ENCODE measurements at regions of chr4 and their contacts with region 1.

Region 1: DNA sequence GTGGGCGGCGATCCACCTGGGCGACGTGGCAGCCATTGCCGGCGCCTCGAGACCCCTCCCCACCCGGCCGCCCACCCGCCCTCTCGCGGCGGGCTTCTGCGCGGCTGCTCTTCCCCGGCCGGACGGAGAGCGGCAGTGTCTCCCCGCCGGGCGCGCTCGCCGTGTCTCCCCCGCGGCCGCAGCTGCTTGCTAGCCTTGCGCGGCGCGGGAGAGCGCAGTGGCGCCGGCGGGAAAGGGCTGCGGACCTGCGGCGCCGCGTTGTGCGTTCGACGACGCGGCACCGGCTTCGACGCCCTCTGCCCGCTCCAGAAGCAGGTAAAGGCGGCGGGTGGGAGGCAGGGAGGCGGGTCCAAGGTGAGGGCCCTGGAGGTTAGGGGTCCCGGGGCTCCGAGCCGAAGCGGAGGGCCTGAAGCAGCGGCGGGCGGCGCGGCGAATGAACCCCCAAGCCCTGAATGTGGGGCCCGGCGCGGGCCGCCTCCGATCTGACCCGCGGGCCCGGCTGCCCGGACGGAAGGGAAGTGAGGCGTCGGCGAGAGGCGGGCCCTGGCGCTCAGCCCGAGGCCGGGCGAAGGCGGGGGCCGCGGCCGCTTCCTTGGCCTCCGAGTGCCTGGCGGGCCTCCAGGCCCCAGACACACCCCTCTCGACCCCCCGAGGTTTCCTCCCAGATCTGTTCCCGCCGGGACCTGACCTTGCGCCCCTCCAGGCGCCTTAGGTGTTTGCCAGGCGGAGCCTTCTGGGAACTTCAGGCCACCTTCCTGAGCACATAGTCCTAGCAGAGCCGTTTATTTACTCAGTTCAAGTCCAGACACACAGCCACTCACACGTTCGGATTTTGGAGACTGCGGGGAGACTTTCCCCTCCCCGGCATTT is at the start of gene N4BP2:
- DNase-seq: peak; percentile 87
- ATAC-seq: peak; percentile 72
- H3K4me3 ChIP-seq: peak within 1 kb of the TSS; percentile 69 to 91 (median 82)
- H3K4me3 Mint-ChIP-seq: peak within 1 kb of the TSS; percentile 95
- H3K27ac ChIP-seq: peak within 1 kb of the TSS; percentile 79 to 84
- H3K27ac Mint-ChIP-seq: peak within 1 kb of the TSS; percentile 94
- H3K4me1 ChIP-seq: peaks cover 14 to 17% of the 10 kb centered on the region in 2 donors
- H3K4me1 Mint-ChIP-seq: peaks cover 27% of the 10 kb centered on the region
- H3K27me3 ChIP-seq: no peaks in the 10 kb centered on the region
- H3K27me3 Mint-ChIP-seq: no peaks in the 10 kb centered on the region
- CTCF ChIP-seq: peak; percentile 83
- total RNA-seq, gene N4BP2: 12.8 and 16.4 TPM in 2 replicates

Region 2: DNA sequence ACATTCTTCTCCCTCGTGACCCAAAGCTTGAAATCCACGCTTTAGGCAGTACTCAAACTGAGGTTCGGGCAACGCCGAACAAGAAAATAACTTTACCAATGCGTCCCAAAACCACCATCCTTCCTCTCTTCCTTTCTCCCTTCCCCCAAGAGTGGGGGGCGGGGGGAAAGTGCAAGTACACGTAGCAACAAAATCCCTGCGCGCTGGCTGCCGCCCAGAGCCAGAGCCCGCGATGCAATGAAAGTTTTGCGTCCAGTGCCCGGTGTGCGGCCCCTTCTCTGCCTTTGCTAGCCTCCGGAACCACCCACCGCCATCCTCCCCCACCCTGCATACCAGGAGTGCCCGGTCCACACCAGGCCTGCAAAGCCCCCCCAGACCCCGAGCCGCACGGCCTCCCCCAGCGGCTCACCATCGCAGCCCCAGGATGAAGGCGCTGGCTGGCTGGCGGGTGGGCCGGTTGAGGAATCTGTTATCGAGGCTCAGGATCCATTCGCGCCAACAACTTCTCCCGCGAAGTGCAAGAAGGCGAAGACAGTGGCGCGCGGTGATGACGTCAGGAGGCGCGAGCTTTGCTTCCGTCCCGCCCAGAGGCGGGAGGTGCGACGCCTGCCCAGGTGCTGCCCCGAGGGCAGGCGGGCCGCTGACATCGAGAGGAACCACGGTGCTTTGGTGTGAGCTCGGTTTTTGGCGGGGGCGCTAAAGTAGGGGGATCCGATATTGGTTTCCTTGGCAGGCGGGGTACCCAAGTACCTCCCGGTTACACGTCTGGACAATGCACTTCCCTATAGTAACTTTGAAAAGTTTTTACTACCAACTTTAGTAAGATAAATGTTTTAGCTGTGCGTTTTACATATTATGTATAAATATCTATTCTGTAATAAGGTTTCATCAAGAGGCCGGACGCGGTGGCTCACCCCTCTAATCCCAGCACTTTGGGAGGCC is 690.9 kb before region 1 on chr4 and contains the start of gene RFC1:
- CTCF ChIA-PET with region 1: no interaction called
- POLR2A ChIA-PET with region 1: no interaction called
- intact Hi-C with region 1: loop called (anchors 10 kb)
- DNase-seq: peak; percentile 96
- ATAC-seq: peak; percentile 95
- H3K4me3 ChIP-seq: peak within 1 kb of the TSS; percentile 73 to 98 (median 94)
- H3K4me3 Mint-ChIP-seq: peak within 1 kb of the TSS; percentile 94
- H3K27ac ChIP-seq: peak within 1 kb of the TSS; percentile 65 to 84
- H3K27ac Mint-ChIP-seq: peak within 1 kb of the TSS; percentile 98
- H3K4me1 ChIP-seq: peaks cover 24 to 32% of the 10 kb centered on the region in 2 donors
- H3K4me1 Mint-ChIP-seq: peaks cover 31% of the 10 kb centered on the region
- H3K27me3 ChIP-seq: no peaks in the 10 kb centered on the region
- H3K27me3 Mint-ChIP-seq: no peaks in the 10 kb centered on the region
- CTCF ChIP-seq: no peak
- total RNA-seq, gene RFC1: 55.1 and 66.5 TPM in 2 replicates

Region 3: DNA sequence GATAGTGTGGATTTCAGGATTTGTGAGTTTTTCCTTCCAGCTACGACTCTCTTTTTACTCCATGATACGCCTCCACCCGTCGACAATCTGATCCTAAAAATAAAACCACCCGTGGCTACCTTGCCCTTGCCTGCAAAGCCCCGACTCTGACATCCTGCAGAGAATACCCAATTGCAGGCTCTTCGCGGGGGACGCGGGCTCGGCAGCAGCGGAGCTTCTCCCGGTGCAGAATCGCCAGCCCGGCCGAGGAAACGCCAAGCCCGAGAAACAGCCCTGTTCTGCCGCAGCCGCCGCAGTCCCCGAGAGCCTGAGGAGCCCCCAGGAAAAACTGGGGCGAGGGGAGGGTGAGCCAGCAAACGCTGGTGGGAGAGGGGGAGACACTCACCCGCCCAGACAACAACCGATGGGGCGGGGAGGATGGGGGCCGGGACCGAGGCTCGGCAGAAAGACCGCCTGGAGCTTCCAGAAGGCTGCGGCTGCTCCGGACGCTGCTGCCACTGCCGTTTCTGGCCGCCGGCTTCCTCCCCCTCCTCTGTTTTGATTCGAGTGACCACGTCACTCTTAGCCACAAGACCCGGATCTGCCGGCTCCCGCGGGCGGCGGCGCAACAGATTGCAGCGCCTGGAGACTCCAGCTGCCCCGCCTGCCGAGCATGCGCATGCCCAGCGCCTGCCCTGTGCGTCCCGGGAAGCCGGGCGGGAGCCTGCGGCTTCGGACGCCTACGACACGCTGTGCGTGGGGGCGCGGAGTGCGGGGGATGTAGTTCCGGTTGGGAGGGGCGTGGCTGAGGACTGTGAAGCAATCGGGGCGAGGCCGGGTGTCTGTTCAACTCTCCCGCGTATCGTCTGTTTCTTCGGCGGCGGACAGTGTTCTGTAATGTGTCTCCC is 418.4 kb before region 1 on chr4 and contains the start of gene SMIM14:
- CTCF ChIA-PET with region 1: no interaction called
- POLR2A ChIA-PET with region 1: interaction called, 4 read pairs
- intact Hi-C with region 1: loop called (anchors 10 kb)
- DNase-seq: peak; percentile 93
- ATAC-seq: peak; percentile 80
- H3K4me3 ChIP-seq: peak within 1 kb of the TSS; percentile 79 to 98 (median 93)
- H3K4me3 Mint-ChIP-seq: peak within 1 kb of the TSS; percentile 91
- H3K27ac ChIP-seq: peak within 1 kb of the TSS; percentile 87 to 92
- H3K27ac Mint-ChIP-seq: peak within 1 kb of the TSS; percentile 91
- H3K4me1 ChIP-seq: peaks cover 39% of the 10 kb centered on the region in 2 donors
- H3K4me1 Mint-ChIP-seq: peaks cover 56% of the 10 kb centered on the region
- H3K27me3 ChIP-seq: no peaks in the 10 kb centered on the region
- H3K27me3 Mint-ChIP-seq: no peaks in the 10 kb centered on the region
- CTCF ChIP-seq: no peak
- total RNA-seq, gene SMIM14: 43.5 and 56.0 TPM in 2 replicates

Region 4: DNA sequence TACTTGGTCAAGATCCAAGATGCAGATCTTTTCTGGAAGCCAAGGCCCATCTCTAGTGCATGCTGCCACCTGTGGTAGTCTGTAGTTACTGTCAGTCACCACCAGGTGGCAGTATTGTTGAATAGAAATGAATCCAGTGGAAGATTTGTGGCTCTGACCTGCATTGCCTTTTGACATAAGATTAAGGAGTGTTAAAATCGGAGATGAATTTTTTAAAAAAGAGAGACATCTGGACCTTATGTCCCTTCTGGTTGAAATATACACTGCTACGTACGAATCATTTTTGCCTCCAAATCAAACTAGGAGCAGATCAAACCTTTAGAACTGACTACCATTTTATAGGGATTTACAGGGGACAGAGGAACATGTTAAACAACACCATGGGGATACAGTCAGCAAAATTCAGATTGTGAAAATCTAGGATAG is 93.0 kb after region 1 on chr4:
- CTCF ChIA-PET with region 1: interaction called, 5 read pairs
- POLR2A ChIA-PET with region 1: no interaction called
- intact Hi-C with region 1: loop called (anchors 2 kb)
- DNase-seq: peak; percentile 87
- ATAC-seq: peak; percentile 95
- H3K4me3 ChIP-seq: no peak overlapping the region
- H3K4me3 Mint-ChIP-seq: peak overlapping the region; percentile 27
- H3K27ac ChIP-seq: peak overlapping the region; percentile 20 to 54
- H3K27ac Mint-ChIP-seq: peak overlapping the region; percentile 77
- H3K4me1 ChIP-seq: peaks cover 22 to 32% of the 10 kb centered on the region in 2 donors
- H3K4me1 Mint-ChIP-seq: peaks cover 38% of the 10 kb centered on the region
- H3K27me3 ChIP-seq: no peaks in the 10 kb centered on the region
- H3K27me3 Mint-ChIP-seq: no peaks in the 10 kb centered on the region
- CTCF ChIP-seq: peak; percentile 83

Region 5: DNA sequence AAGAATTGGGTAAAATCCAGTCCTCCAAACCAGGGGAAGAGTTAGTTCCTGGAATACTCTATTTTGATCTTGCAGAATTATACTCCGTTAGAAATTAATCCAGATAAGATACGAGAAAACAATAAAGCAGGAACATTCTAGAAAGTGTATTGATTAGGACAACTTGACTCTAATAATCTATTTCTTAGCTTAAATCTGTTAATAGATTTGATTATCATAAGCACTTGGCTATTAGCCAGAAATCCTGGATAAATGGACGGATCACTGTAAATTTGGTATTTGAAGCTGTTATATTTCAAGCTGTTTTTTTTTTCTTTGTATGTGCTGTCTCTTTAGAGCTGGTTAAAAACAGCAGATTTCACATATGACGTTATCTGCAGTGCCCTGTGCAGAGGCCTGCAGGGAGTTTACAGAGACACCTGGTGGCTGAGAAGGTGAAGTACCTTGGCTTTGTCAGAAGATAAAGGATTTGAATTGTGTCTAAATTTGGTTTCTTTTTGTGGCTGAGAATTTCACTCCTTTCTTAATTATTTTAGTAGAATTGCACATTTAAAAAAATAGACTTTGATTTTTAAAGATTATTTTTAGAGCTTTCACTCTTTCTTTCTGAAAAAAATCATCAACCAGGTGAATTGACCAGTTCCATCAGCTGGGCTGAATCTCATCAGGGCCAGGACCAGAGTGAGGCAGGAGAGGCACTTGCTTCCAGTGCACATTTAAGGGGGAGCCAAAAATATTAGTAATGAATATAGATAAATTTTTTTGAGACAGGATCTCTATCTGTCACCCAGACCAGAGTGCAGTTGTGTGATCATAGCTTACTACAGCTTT is 268.5 kb after region 1 on chr4:
- CTCF ChIA-PET with region 1: interaction called, 48 read pairs
- POLR2A ChIA-PET with region 1: interaction called, 5 read pairs
- intact Hi-C with region 1: loop called (anchors 1 kb)
- DNase-seq: peak; percentile 81
- ATAC-seq: peak; percentile 100
- H3K4me3 ChIP-seq: no peak overlapping the region
- H3K4me3 Mint-ChIP-seq: no peak overlapping the region
- H3K27ac ChIP-seq: no peak overlapping the region
- H3K27ac Mint-ChIP-seq: peak overlapping the region; percentile 46
- H3K4me1 ChIP-seq: peaks cover 8 to 14% of the 10 kb centered on the region in 2 donors
- H3K4me1 Mint-ChIP-seq: peaks cover 18% of the 10 kb centered on the region
- H3K27me3 ChIP-seq: peaks cover 0 to 4% (median 0%) of the 10 kb centered on the region in 4 experiments
- H3K27me3 Mint-ChIP-seq: peaks cover 8% of the 10 kb centered on the region
- CTCF ChIP-seq: peak; percentile 96

Region 6: DNA sequence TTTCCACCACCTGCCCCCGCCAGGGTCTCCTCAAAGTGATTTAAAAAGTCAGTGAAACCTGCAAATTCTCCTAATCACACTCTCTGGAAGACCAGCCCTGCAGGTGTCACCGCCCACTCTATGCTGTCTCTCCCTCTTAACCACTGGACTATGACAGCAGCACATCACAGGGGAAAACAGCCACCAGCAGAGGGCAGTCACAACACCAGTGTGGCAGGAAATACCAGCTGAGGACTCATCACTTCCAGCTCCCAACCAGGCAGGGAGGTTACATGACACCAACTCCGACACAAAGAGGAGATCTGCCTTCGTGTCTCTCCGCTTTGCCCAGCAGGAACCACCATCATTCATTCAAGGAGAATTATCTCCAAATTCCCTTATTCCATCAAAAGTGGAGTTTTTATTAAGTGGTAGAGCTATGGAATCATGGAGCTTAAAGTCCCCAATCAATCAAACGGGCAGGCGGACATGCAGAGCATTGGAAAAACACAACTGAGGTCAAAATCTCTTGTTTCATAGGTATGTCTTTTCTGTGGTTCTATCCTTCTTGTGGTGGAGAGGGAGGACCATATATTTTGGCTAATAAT is 784.1 kb after region 1 on chr4:
- CTCF ChIA-PET with region 1: no interaction called
- POLR2A ChIA-PET with region 1: interaction called, 3 read pairs
- intact Hi-C with region 1: loop called (anchors 5 kb)
- DNase-seq: peak; percentile 79
- ATAC-seq: peak; percentile 57
- H3K4me3 ChIP-seq: peak overlapping the region in 1 of 5 experiments; percentile 37
- H3K4me3 Mint-ChIP-seq: peak overlapping the region; percentile 77
- H3K27ac ChIP-seq: peak overlapping the region; percentile 53 to 56
- H3K27ac Mint-ChIP-seq: peak overlapping the region; percentile 88
- H3K4me1 ChIP-seq: peaks cover 33 to 47% of the 10 kb centered on the region in 2 donors
- H3K4me1 Mint-ChIP-seq: peaks cover 42% of the 10 kb centered on the region
- H3K27me3 ChIP-seq: no peaks in the 10 kb centered on the region
- H3K27me3 Mint-ChIP-seq: peaks cover 2% of the 10 kb centered on the region
- CTCF ChIP-seq: peak; percentile 65

Measured in B cell (primary cell).